Activated B cell treated with CpG ODN at 0.5 μM for 24 hours (primary cell): ENCODE measurements at regions of chr5 and their contacts with region 1.

Region 1: DNA sequence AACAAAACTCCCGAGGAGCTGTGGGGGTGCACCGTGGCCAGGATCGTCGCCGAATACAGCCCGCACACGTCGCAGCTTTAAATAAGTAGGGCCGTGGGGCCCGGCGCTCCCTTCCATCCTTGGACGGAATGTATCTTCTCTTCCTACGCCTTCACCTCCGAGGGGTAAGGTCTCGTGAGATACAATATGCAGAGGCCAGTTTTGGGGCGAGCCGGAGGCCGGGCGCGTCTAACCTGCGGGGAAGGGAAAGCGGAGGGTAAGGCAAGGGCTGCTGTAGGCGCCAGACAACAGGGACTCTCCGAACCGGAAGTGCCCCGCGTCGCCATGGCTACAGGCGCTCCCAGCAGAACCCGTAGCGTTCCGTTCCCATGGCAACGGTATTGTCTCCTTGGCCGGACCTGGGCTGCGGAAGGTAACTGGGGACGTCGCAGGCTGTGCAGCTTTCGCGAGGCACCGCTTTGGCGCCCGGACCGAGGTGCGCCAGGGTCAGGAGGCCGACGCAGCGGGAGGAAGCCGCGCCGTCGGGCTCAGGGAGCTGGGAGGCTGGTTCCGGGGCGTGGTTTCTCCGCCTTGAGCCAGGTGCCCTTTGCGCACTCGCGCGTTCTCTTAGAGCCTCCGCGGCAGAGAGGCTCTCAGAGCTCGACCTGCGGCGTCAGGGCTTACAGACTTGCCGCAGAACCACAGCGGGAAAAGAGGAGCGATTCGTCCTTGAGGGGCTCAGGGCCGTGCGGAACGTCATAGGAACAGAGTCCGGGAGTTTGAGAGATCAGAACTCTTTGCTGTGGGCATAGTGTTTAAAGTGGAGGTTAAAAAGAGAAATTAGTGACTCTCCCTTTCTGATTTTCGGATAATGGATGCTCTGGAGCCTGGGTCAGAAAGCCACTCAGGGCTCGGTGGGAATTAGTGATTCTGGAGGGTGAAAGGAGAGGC is at the start of gene TTC23L:
- DNase-seq: peak; percentile 88
- ATAC-seq: peak; percentile 89
- H3K4me3 Mint-ChIP-seq: peak within 1 kb of the TSS; percentile 94
- H3K27ac Mint-ChIP-seq: peak within 1 kb of the TSS; percentile 96
- H3K4me1 Mint-ChIP-seq: peaks cover 13% of the 10 kb centered on the region
- H3K27me3 Mint-ChIP-seq: peaks cover 2% of the 10 kb centered on the region
- CTCF ChIP-seq: no peak
- total RNA-seq, gene TTC23L: not detected in 2 replicates

Region 2: DNA sequence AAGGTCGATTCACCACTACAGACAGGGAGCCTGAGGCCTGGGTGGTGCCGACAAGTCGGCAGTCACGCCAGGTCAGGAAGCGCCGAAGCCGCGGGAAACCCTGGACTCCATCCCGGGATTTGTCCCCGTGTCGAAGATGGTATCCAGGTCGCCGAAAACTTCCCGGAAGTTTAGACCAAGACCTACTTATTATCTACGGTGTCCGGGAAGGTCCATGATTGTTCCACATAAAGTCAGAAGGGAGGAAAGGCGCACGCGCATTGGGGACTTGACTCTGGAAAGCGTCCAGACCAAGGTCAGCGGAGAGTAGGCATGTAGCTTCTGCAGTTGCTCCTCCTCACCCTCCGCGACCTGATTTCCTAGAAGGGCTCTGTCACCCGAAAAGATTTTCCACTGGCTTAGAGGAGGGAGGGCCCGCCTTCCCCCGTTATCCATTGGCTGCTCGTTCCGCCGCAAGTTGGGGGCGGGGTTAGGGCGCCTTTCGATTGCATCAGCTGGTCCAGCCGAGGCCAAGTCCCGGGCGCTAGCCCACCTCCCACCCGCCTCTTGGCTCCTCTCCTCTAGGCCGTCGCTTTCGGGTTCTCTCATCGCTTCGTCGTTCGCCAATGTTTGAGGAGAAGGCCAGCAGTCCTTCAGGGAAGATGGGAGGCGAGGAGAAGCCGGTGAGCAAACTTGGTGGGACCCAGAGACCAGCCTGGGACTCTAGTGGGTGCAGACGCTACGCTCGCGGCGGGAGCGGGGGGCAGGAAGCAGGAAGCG is 1398.4 kb before region 1 on chr5 and contains the start of gene TARS1:
- CTCF ChIA-PET with region 1: no interaction called
- POLR2A ChIA-PET with region 1: interaction called, 3 read pairs
- intact Hi-C with region 1: loop called (anchors 2 kb)
- DNase-seq: peak; percentile 89
- ATAC-seq: peak; percentile 95
- H3K4me3 Mint-ChIP-seq: no peak within 1 kb of the TSS
- H3K27ac Mint-ChIP-seq: no peak within 1 kb of the TSS
- H3K4me1 Mint-ChIP-seq: peaks cover 21% of the 10 kb centered on the region
- H3K27me3 Mint-ChIP-seq: no peaks in the 10 kb centered on the region
- CTCF ChIP-seq: no peak
- total RNA-seq, gene TARS1: 176 and 180 TPM in 2 replicates

Region 3: DNA sequence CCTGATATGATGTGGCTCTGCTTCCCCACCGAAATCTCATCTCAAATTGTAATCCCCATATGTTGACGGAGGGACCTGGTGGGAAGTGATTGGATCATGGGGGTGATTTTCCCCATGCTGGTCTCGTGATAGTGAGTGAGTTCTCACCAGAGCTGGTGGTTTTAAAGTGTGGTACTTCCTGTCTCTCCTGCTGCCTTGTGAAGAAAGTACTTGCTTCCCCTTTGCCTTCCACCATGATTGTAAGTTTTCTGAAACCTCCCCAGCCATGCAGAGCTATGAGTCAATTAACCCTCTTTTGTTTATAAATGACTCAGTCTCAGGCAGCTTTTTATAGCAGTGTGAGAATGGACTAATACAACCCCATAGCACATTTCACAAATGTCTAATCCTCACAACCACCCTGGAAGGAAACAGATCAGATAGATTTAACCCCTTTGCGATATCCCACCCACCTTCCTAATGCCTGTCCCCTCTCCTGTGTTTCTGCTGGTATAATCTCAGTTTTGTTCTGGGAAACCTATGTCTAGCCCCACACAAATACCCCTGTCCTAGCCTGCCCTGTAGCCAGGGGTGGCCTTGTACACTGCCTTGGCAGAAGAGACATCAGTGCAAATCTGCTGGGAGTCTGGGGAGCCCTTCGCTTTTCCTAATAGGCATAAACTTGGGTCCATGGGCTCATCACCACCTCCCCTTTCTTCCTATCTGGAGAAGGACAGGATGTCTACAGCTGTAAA is 339.9 kb before region 1 on chr5:
- CTCF ChIA-PET with region 1: no interaction called
- POLR2A ChIA-PET with region 1: interaction called, 6 read pairs
- intact Hi-C with region 1: loop called (anchors 1 kb)
- DNase-seq: no peak
- ATAC-seq: peak; percentile 87
- H3K4me3 Mint-ChIP-seq: peak overlapping the region; percentile 48
- H3K27ac Mint-ChIP-seq: peak overlapping the region; percentile 79
- H3K4me1 Mint-ChIP-seq: peaks cover 21% of the 10 kb centered on the region
- H3K27me3 Mint-ChIP-seq: peaks cover 4% of the 10 kb centered on the region
- CTCF ChIP-seq: no peak

Region 4: DNA sequence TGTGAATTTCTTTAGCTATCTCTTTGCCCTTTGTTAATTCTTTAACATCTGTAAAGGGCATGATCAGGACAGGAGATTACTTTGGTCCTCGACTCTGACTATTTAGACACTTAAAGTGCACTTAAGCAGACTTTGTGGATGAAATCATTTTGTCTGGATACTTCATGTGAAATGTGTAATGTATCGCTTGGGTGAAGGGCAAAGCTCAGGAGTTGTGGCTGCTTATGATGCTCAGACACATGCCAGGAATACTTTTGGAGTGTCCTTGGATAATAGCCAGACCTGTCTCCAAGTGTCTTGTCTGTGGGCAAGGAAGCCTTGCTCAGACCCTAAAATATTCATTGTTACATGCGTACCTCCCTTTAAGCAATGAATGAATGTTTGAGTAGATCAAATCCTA is 95.2 kb before region 1 on chr5:
- CTCF ChIA-PET with region 1: no interaction called
- POLR2A ChIA-PET with region 1: no interaction called
- intact Hi-C with region 1: loop called (anchors 1 kb)
- DNase-seq: no peak
- ATAC-seq: no peak
- H3K4me3 Mint-ChIP-seq: no peak overlapping the region
- H3K27ac Mint-ChIP-seq: no peak overlapping the region
- H3K4me1 Mint-ChIP-seq: peaks cover 53% of the 10 kb centered on the region
- H3K27me3 Mint-ChIP-seq: no peaks in the 10 kb centered on the region
- CTCF ChIP-seq: no peak

Region 5: GRCh38 chr5:35026280-35026840 is 187.3 kb after region 1 on chr5:
- CTCF ChIA-PET with region 1: no interaction called
- POLR2A ChIA-PET with region 1: no interaction called
- intact Hi-C with region 1: no loop called
- DNase-seq: no peak
- ATAC-seq: no peak
- H3K4me3 Mint-ChIP-seq: no peak overlapping the region
- H3K27ac Mint-ChIP-seq: no peak overlapping the region
- H3K4me1 Mint-ChIP-seq: no peaks in the 10 kb centered on the region
- H3K27me3 Mint-ChIP-seq: peaks cover 2% of the 10 kb centered on the region
- CTCF ChIP-seq: no peak

Region 6: DNA sequence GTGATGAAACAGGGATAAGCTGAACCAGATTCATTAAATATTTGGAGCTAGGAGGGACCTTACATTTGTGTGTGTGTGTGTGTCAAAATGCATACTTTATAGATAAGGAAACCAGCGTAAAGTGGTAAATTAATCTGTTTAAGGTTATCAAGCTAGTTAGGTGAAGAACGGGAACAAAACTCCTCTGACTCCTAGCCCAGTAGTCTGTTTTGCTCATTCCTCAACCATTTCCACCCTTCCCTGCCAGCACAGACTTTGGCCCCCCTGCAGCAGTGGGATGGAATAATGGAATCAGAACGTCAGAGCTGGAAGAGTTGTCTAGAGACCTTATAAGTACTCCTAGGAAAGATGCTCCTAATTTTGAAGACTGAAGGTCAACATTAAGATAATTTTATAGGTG is 202.2 kb after region 1 on chr5:
- CTCF ChIA-PET with region 1: no interaction called
- POLR2A ChIA-PET with region 1: no interaction called
- intact Hi-C with region 1: no loop called
- DNase-seq: no peak
- ATAC-seq: no peak
- H3K4me3 Mint-ChIP-seq: no peak overlapping the region
- H3K27ac Mint-ChIP-seq: no peak overlapping the region
- H3K4me1 Mint-ChIP-seq: no peaks in the 10 kb centered on the region
- H3K27me3 Mint-ChIP-seq: peaks cover 10% of the 10 kb centered on the region
- CTCF ChIP-seq: no peak

Region 7: DNA sequence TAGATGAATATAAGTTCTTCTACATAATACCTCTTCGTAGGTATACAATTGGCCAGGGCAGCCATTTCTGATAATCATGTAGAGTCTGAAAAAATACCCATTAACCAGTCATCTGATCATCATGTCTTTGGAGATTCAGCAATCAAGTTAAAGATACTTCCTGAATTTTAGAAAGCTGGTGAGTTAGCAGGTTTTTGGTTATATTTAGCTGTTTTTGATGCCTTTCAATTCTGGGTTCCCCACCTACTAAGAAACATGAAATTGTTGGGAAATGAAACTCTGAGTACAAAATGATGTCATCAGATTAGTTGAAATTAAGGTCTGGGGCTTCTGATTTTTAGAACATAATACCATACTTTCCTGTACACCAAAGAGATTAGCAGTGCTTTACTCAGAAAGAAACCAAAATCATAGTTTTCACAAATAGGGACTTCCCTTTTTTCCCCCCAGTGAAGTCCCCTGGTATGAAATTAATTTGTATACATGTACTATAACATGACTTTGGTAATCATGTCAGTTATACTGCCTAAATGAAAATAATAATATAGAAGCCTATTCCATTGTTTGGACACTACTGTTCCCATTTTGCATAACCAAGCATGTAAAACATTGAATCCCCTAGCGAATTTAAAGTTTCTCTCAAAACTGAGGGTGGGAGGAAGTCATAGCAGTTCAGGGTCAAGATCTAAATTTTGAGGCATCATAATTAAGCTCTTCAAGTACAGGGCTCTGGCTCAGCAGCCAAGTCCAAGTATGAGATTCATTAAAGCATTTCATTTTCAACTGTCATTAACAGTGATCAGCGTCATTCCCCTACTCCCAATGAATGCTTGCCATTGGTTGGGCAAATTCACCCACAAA is 373.3 kb after region 1 on chr5:
- CTCF ChIA-PET with region 1: no interaction called
- POLR2A ChIA-PET with region 1: no interaction called
- intact Hi-C with region 1: loop called (anchors 10 kb)
- DNase-seq: no peak
- ATAC-seq: peak; percentile 86
- H3K4me3 Mint-ChIP-seq: peak overlapping the region; percentile 22
- H3K27ac Mint-ChIP-seq: peak overlapping the region; percentile 92
- H3K4me1 Mint-ChIP-seq: peaks cover 26% of the 10 kb centered on the region
- H3K27me3 Mint-ChIP-seq: peaks cover 2% of the 10 kb centered on the region
- CTCF ChIP-seq: no peak

Region 8: DNA sequence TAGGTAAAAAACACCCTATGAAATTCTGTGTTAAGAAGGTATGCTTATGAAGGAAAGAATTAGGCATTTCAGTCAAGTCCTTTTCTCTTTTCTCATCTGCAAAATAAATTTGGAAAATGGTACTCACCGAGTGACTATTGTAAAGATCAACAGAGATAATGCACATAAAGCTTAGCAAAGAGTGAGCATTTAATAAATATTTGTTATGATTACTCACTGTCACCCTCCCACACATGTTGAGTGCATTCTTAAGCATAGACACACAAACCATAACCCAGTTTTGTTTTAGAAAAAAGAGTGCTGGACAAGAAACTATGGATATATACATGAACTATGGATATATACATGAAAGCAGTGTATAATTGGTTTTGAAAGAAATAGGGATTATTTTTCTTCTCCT is 446.0 kb after region 1 on chr5:
- CTCF ChIA-PET with region 1: no interaction called
- POLR2A ChIA-PET with region 1: no interaction called
- intact Hi-C with region 1: no loop called
- DNase-seq: no peak
- ATAC-seq: no peak
- H3K4me3 Mint-ChIP-seq: no peak overlapping the region
- H3K27ac Mint-ChIP-seq: no peak overlapping the region
- H3K4me1 Mint-ChIP-seq: no peaks in the 10 kb centered on the region
- H3K27me3 Mint-ChIP-seq: no peaks in the 10 kb centered on the region
- CTCF ChIP-seq: no peak

Region 9: DNA sequence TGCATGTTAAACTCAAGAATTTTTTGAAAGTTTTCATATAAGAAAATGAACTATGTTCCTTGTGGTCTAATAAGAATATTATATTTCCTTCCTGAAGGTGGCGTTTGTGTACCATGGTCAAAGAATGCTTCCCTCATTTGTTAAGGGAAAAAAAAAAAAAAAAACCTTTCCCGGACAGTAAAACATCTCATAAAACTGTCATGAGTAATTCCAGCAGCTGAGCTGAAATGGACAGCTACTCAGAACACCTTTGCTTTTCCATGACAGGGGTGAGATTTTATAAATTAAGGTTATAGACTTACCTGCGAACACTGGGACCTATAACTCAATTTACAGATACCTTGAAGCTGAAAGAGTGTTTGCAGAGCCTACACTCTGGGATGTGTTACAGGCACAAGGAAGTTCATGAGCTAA is 1575.8 kb after region 1 on chr5:
- CTCF ChIA-PET with region 1: no interaction called
- POLR2A ChIA-PET with region 1: no interaction called
- intact Hi-C with region 1: no loop called
- DNase-seq: no peak
- ATAC-seq: no peak
- H3K4me3 Mint-ChIP-seq: no peak overlapping the region
- H3K27ac Mint-ChIP-seq: no peak overlapping the region
- H3K4me1 Mint-ChIP-seq: peaks cover 3% of the 10 kb centered on the region
- H3K27me3 Mint-ChIP-seq: peaks cover 4% of the 10 kb centered on the region
- CTCF ChIP-seq: no peak